ENCODE measurements at regions of chr17 and their contacts with region 1.

Region 1: DNA sequence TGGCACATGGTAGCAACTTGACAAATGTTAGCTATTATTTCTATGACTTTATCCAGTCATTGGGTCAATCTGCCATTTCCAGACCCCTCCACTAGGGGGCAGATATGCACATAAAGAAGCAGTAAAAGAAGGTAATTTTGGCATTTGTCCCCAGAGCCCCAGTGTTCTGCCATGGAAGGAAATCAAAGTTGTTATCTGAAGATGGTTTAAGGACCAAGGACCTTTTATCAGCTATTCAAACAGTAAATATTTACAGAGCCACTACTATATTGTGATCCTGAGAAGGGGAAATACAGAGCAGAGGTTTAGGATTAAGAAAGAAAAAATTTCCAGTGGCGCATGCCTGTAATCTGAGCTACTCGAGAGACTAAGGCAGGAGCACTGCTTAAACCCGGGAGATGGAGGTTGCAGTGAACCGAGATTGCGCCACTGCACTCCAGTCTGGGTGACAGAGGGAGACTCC is 20.0 kb downstream of the TRAF4 start:
- DNase-seq: peak in 6 of 10 donors; percentile 64 to 87 (median 74)

Region 2: DNA sequence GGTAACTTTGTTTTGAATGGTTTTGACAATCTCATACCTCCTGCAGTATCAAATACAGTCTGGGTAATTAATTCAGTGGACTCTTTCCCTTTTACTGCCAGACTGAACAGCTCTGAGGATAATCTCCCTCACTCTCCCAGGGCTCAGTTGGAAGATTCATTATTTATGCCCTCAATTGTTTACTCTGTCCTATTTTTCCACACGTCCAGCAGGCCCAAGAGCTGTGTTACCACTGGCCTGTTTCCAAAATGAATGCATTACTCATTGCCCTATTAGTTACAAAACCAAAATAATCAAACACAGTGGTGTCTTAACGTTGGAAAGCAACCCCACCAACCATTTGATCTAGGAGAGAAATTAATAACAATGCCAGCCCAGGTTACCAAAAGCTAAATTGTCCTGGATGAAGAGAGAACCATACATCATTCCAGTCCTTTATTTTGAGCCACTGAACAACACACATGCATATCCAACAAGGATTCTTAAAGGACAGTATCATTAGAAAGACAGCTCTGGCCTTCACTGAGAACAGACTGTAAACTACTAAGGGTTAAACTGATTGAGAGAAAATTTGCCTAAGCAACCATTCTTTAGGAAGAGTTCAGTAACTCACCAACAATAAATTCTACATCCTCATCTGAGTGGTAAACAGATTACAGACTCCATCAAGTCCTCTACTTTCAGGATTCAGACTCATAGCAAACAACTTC is 44.2 kb after region 1 on chr17:
- intact Hi-C with region 1: loop called (anchors 5 kb)
- DNase-seq: no peak

Region 3: DNA sequence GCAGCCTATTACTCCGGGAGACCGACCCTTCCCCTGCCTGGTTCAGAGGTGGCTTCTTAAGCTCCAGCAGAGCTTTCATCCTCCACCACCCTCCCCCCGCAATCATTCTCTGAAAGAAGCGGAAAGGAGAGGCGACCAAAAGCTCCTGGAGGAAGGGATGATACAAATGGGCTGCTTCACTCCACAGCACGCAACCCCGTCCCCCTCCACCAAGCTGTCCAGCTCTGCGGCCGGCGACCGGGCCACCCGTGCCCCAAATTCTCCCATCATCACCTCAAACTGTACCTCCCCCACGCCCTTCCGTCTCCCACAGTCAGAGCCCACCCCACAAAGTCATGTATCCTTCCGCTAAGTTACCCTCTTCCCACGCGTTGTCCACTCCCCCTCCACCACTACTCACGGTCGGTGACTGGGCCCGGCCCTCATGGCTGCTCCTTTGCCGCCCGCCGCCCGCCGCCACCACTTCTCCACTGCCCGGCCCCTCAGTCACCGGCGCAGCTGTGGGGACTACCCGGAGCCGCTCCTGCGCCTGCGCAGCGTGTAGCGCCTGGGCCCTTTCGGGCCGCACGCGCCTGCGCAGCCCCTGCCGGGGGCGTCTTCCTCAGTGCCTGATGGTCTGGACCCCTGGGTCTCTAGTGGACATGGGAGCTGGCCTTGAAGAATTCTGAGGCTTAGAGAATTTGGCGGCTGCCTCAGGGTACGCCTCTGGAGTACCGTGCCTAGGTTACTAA is 78.6 kb after region 1 on chr17 and contains the start of gene FAM222B:
- intact Hi-C with region 1: loop called (anchors 5 kb)
- DNase-seq: peak; percentile 72 to 98 (median 82)

Region 4: DNA sequence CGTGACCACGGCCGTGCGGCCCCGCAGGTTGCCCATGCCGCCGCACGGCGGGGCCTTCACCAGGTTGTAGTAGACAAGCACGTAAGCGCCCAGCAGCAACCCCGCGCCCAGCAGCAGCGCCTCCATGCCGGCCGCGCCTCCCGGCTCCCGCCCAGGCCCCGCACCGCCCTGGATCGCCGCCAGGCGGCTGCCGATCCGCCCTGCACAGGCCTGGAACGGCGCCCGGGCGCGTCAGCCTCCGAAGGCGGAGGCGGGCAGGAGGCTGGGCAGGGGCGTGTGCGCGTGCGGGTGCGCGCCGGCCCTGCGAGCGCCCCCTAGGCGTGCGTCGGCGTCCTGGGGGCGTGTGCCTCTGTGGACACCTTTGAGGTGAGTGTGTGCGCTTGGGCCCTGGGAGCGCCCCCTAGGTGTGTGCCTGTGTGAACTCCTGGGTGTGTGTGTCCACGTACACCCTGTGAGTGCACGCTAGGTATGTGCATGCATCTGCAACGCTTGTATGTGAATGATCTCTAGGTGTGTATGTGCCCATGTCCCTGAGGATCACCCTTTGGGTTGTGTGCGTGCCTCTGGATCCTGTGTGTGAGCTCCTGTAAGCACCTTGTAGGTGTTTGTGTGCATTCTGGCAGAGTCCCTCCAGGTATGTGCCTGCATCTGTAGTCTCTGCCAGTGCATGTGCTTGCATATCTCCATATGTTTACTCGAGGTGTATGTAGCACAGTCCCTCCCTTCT is 139.1 kb after region 1 on chr17 and contains the start of gene DHRS13:
- intact Hi-C with region 1: loop called (anchors 5 kb)
- DNase-seq: peak; percentile 70 to 97 (median 80)

Measured in posterior cingulate gyrus (tissue), 11 donors.